CD4-positive, alpha-beta T cell (primary cell): ENCODE measurements at regions of chr1 and their contacts with region 1.

Region 1: GRCh38 chr1:156813750-156814570 is 2.7 kb downstream of the SH2D2A start:
- DNase-seq: peak; percentile 36 to 90 (median 70)
- ATAC-seq: peak; percentile 51
- H3K4me3 ChIP-seq: peak overlapping the region; percentile 73
- H3K4me3 Mint-ChIP-seq: peak overlapping the region; percentile 83
- H3K27ac ChIP-seq: peak overlapping the region; percentile 97 to 99
- H3K27ac Mint-ChIP-seq: peak overlapping the region; percentile 98
- H3K4me1 ChIP-seq: peaks cover 80% of the 10 kb centered on the region
- H3K4me1 Mint-ChIP-seq: peaks cover 58% of the 10 kb centered on the region
- H3K27me3 ChIP-seq: no peaks in the 10 kb centered on the region
- H3K27me3 Mint-ChIP-seq: peaks cover 6% of the 10 kb centered on the region
- CTCF ChIP-seq: peak; percentile 70

Region 2: DNA sequence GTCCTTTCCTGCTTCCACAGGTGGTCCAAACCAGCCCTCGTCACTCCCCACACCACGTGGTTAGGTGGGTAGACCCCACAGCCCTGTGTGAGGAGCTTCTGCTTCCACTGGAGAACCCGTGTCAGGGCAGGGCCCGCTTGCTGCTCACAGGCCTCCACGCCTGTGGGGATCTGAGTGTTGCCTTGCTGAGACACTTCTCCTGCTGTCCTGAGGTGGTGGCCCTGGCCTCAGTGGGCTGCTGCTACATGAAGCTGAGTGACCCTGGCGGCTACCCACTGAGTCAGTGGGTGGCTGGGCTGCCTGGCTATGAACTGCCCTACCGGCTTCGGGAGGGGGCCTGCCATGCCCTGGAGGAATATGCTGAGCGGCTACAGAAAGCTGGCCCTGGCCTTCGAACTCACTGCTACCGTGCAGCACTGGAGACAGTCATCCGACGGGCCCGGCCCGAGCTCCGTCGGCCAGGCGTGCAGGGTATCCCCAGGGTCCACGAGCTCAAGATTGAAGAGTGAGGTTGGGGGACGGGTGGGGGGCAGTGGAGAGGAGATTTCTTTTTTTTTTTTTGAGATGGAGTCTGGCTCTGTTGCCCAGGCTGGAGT is 79.9 kb before region 1 on chr1:
- CTCF ChIA-PET with region 1: no interaction called
- POLR2A ChIA-PET with region 1: no interaction called
- intact Hi-C with region 1: loop called in 1 of 2 experiments (anchors 2 kb)
- DNase-seq: no peak
- ATAC-seq: no peak
- H3K4me3 ChIP-seq: no peak overlapping the region
- H3K4me3 Mint-ChIP-seq: no peak overlapping the region
- H3K27ac ChIP-seq: no peak overlapping the region
- H3K27ac Mint-ChIP-seq: no peak overlapping the region
- H3K4me1 ChIP-seq: peaks cover 1% of the 10 kb centered on the region
- H3K4me1 Mint-ChIP-seq: peaks cover 12% of the 10 kb centered on the region
- H3K27me3 ChIP-seq: no peaks in the 10 kb centered on the region
- H3K27me3 Mint-ChIP-seq: no peaks in the 10 kb centered on the region
- CTCF ChIP-seq: no peak

Region 3: GRCh38 chr1:156773607-156774006 is 40.4 kb before region 1 on chr1:
- CTCF ChIA-PET with region 1: no interaction called
- POLR2A ChIA-PET with region 1: no interaction called
- intact Hi-C with region 1: loop called in 1 of 2 experiments (anchors 5 kb)
- DNase-seq: peak in 2 of 14 experiments; percentile 19 to 28
- ATAC-seq: peak; percentile 63
- H3K4me3 ChIP-seq: no peak overlapping the region
- H3K4me3 Mint-ChIP-seq: peak overlapping the region; percentile 6
- H3K27ac ChIP-seq: no peak overlapping the region
- H3K27ac Mint-ChIP-seq: no peak overlapping the region
- H3K4me1 ChIP-seq: peaks cover 44% of the 10 kb centered on the region
- H3K4me1 Mint-ChIP-seq: peaks cover 74% of the 10 kb centered on the region
- H3K27me3 ChIP-seq: no peaks in the 10 kb centered on the region
- H3K27me3 Mint-ChIP-seq: no peaks in the 10 kb centered on the region
- CTCF ChIP-seq: no peak

Region 4: GRCh38 chr1:156838981-156839410 is 25.0 kb after region 1 on chr1:
- CTCF ChIA-PET with region 1: interaction called, 11 read pairs
- POLR2A ChIA-PET with region 1: no interaction called
- intact Hi-C with region 1: no loop called
- DNase-seq: peak in 11 of 14 experiments; percentile 34 to 74 (median 42)
- ATAC-seq: peak; percentile 84
- H3K4me3 ChIP-seq: no peak overlapping the region
- H3K4me3 Mint-ChIP-seq: no peak overlapping the region
- H3K27ac ChIP-seq: no peak overlapping the region
- H3K27ac Mint-ChIP-seq: no peak overlapping the region
- H3K4me1 ChIP-seq: peaks cover 24% of the 10 kb centered on the region
- H3K4me1 Mint-ChIP-seq: peaks cover 12% of the 10 kb centered on the region
- H3K27me3 ChIP-seq: peaks cover 27 to 37% of the 10 kb centered on the region in 2 experiments
- H3K27me3 Mint-ChIP-seq: peaks cover 60% of the 10 kb centered on the region
- CTCF ChIP-seq: peak; percentile 85

Region 5: DNA sequence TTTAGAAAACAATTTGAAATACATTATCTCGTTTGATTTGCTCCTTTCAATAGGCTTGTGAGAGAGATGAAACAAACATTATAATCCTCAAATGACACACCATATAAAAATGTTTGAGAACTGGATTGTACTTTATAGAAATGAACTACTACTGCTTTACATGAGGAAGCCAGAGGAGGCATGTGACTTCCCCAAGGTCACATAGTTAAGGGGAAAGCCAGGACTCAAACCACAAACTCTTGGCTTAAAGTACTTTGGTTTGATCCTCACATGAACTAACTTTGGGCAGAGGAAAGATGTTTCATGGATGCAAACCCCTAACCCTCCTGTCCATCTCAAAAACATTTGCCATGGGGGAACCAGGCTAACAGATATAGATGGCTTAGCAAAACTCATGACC is 226.8 kb after region 1 on chr1:
- CTCF ChIA-PET with region 1: no interaction called
- POLR2A ChIA-PET with region 1: no interaction called
- intact Hi-C with region 1: no loop called
- DNase-seq: peak in 1 of 14 experiments; percentile 8
- ATAC-seq: no peak
- H3K4me3 ChIP-seq: no peak overlapping the region
- H3K4me3 Mint-ChIP-seq: no peak overlapping the region
- H3K27ac ChIP-seq: no peak overlapping the region
- H3K27ac Mint-ChIP-seq: no peak overlapping the region
- H3K4me1 ChIP-seq: peaks cover 5% of the 10 kb centered on the region
- H3K4me1 Mint-ChIP-seq: peaks cover 6% of the 10 kb centered on the region
- H3K27me3 ChIP-seq: peaks cover 19 to 55% of the 10 kb centered on the region in 2 experiments
- H3K27me3 Mint-ChIP-seq: peaks cover 73% of the 10 kb centered on the region
- CTCF ChIP-seq: no peak

Region 6: DNA sequence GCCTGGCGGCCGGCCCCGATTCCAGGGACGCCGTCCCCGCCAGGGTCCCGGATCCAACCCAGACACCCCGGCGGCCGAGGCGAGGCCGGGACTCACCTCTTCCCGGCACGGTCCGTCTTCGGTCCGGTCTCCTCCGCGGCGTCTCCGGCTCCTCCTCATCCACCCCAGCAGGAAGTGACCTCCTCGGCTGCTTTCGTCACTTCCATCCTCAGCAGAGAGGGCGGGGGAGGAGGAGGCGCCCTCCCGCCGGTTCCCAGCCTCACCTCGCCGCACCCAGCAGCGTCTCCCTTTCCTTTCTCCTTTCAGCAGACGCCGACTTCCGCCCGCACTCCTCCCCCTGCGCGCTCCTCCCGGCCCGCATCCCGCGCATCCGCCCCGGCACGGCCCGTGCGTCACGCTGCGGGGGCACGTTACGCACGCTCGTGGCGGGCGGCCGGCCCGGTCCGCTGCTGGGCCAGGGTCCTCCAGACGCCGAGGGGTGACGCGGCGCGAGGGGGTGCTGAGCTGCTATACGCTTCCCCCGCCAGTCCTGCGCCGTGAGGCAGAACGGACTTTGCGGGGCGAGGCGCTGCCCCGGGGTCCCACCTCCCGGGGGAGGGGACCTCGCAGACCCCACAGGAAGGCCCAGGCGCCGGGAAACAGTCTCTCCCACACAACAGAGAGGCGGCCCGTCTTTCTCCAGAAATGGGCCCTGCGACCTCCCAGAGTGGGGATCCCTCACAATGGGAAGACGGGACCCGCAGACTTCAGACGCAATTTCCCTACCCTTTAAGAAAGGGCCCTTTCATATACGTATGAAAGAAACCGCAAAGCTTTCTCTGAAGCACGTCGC is 324.5 kb after region 1 on chr1 and contains the start of gene ETV3:
- CTCF ChIA-PET with region 1: no interaction called
- POLR2A ChIA-PET with region 1: no interaction called
- intact Hi-C with region 1: loop called in 1 of 2 experiments (anchors 10 kb)
- DNase-seq: peak; percentile 70 to 96 (median 81)
- ATAC-seq: peak; percentile 81
- H3K4me3 ChIP-seq: peak within 1 kb of the TSS; percentile 84
- H3K4me3 Mint-ChIP-seq: peak within 1 kb of the TSS; percentile 94
- H3K27ac ChIP-seq: peak within 1 kb of the TSS; percentile 90 to 98
- H3K27ac Mint-ChIP-seq: peak within 1 kb of the TSS; percentile 90
- H3K4me1 ChIP-seq: peaks cover 48% of the 10 kb centered on the region
- H3K4me1 Mint-ChIP-seq: peaks cover 60% of the 10 kb centered on the region
- H3K27me3 ChIP-seq: no peaks in the 10 kb centered on the region
- H3K27me3 Mint-ChIP-seq: no peaks in the 10 kb centered on the region
- CTCF ChIP-seq: no peak
- total RNA-seq, gene ETV3: 115 to 117 TPM